Dendritic cell treated with granulocyte-macrophage colony-stimulating factor and Interleukin-4, amounts not matched to agents 40 ng/mL and 50 ng/mL, for 4 days (primary cell): ENCODE measurements at regions of chr19 and their contacts with region 1.

Region 1: DNA sequence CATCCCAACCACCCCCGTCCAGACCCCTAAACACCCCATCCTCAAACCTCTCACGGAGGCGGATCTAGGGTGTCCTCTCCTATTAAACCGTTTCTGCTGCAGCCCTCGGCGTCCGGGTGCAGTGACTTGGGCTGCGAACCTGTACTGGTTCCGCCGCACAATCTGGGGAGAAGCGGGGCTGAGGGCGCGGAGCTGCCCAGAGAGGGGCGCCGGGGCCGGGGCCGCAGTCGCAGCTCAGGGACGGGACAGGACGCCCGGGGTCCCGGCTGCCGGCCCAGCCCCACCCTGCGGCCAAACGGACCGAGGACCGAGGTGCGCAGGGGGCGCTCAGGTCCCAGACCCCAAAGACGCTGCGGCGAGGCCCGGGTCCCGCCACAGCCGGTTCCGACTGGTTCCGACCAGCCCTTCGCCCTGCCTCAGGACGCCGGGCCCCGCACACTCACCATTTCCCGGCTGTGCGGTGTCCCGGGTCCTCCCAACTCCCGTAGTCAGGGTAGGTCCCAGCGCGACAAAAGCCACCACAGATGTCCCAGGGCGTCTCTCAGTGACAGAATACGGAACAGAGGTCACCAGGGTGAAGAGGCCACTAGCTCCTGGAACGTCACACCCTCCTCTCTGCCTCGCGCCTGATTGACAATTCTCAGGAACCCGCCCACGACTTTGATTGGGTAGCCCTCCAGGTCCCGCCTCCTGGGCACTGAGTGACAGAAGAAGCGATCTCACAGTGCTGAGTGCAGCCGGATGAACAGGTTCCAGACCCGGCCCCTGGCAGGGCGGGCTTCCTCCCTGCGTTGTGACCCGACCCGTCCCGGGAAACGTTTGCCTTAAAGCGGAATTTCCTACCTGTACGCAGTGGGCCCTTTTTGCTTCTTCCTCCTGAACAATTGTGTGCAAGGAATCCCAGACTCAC is at the start of gene ZNF44:
- H3K4me3 Mint-ChIP-seq: peak within 1 kb of the TSS; percentile 100
- H3K27ac Mint-ChIP-seq: peak within 1 kb of the TSS; percentile 92
- H3K4me1 Mint-ChIP-seq: peaks cover 26% of the 10 kb centered on the region
- H3K27me3 Mint-ChIP-seq: peaks cover 5% of the 10 kb centered on the region

Region 2: GRCh38 chr19:12162882-12163806 is 131.4 kb before region 1 on chr19 and contains the start of gene ZNF136:
- intact Hi-C with region 1: loop called (anchors 2 kb)
- H3K4me3 Mint-ChIP-seq: peak within 1 kb of the TSS; percentile 98
- H3K27ac Mint-ChIP-seq: peak within 1 kb of the TSS; percentile 98
- H3K4me1 Mint-ChIP-seq: peaks cover 39% of the 10 kb centered on the region
- H3K27me3 Mint-ChIP-seq: no peaks in the 10 kb centered on the region

Region 3: DNA sequence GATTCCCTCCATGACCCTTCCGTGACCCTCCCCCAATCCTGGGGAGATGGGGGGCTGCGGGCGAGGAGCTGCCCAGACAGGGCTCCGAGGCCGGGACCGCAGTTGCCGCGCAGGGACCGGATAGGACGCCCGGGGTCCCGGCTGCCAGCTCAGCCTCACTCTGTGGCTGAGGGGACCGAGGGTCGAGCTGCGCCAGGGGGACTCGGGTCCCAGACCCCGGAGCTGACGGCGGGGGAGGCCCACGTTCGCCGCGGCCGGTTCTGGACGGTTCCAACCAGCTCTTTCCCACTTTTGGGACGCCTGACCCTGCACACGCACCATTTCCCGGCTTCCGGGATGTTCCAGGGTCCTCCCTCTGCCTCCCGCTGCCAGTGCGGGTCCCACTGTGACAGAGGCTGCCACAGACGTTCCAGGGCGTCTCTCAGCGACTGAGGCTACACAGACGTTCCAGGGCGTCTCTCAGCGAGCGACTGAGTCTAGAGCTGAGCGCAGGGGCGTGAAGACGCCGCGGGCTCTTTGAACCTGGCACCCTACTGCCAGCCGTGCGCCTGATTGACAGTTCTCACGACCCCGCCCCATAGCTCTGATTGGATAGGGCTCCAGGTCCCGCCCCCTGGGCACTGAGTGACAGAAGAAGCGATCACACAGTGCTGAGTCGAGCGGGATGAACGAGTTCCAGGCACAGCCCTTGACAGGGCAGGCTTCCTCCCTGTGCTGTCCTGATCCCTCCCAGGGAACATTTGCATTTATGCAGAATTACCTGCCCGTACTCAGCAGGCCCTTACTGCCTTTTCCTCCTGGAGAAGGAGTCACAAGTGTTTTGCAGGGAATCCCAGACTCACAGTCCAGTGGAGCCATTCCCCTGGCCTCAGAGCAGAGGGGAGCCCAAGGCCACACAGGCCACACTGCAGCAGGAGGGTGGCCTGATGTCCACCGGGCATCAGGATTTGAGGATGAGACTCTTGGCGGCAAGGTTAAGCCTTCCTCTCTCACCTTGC is 39.0 kb after region 1 on chr19 and contains the start of gene ZNF563:
- intact Hi-C with region 1: loop called (anchors 5 kb)
- H3K4me3 Mint-ChIP-seq: peak within 1 kb of the TSS; percentile 98
- H3K27ac Mint-ChIP-seq: peak within 1 kb of the TSS; percentile 96
- H3K4me1 Mint-ChIP-seq: peaks cover 26% of the 10 kb centered on the region
- H3K27me3 Mint-ChIP-seq: no peaks in the 10 kb centered on the region

Region 4: DNA sequence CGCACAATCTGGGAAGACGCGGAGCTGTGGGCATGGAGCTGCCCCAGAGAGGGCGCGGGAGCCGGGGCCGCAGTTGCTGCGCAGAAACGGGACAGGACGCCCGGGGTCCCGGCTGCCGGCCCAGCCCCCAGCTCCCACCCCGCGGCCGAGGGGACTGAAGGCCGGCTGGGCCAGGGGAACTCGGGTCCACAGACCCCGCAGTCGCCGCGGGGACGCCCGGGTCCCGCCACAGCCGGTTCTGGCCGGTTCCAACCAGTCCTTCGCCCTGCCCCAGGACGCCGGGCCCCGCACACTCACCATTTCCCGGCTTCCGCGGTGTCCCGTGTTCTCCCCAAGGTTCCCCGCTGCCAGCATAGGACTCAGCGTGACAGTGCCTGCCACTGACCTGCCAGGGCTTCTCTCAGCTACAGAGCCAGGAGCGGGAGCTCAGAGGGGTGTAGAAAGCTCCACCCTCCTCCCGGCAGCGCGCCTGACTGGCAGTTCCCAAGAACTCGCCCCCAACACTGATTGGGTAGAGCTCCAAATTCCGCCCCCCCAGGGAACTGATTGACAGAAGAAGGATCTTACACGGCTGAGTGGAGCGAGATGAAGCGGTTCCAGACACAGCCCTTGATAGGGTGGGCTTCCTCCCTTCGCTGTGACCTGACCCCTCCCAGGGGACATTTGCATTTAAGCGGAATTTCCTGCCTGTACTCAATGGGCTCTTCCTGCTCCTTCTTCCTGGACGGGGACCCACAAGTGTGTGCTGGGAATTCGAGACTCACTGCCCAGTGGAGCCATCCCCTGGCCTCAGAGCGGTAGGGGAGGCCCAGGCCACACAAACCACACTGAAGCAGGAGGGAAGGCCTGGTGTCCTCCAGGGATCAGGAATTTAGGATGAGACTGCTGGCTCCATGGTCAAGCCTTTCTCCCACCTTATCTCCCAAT is 71.0 kb after region 1 on chr19 and contains the start of gene ZNF442:
- intact Hi-C with region 1: loop called (anchors 1 kb)
- H3K4me3 Mint-ChIP-seq: peak within 1 kb of the TSS; percentile 96
- H3K27ac Mint-ChIP-seq: peak within 1 kb of the TSS; percentile 91
- H3K4me1 Mint-ChIP-seq: peaks cover 32% of the 10 kb centered on the region
- H3K27me3 Mint-ChIP-seq: peaks cover 14% of the 10 kb centered on the region

Region 5: DNA sequence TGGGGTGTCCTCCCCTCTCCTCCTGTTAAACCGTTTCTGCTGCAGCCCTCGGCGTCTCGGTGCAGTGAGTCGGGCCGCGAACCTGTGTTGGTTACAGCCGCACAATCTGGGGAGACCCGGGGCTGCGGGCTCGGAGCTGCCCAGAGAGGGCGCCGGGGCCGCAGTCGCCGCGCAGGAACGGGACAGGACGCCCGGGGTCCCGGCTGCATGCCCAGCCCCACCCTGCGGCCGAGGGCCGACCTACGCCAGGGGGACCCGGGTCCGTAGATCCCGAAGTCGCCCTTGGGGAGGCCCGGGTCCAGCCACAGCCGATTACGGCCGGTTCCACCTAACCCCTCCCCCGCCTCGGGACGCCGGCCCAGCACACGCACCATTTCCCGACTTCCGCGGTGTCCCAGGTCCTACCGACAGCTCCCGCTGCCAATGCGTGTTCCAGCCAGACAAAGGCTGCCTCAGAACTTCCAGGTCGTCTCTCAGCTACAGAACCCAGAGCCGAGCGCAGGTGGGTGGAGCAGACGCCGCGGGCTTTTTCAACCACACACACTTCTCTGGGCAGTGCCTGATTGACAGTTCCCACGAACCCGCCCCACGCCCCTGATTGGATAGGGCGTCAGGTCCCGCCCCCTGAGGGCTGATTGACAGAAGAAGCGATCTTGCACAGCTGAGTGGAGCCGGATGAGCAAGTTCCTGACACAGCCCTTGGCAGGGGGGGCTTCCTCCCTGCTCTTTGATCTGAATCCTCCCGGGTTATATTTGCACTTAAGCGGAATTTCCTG is 146.2 kb after region 1 on chr19 and contains the start of gene ZNF443:
- intact Hi-C with region 1: loop called (anchors 2 kb)
- H3K4me3 Mint-ChIP-seq: peak within 1 kb of the TSS; percentile 100
- H3K27ac Mint-ChIP-seq: peak within 1 kb of the TSS; percentile 89
- H3K4me1 Mint-ChIP-seq: peaks cover 12% of the 10 kb centered on the region
- H3K27me3 Mint-ChIP-seq: no peaks in the 10 kb centered on the region